ENCODE measurements at regions of chr5 and their contacts with region 1.

Region 1: GRCh38 chr5:141349917-141350619 is at the start of gene PCDHGB1:
- DNase-seq: no peak
- H3K4me3 ChIP-seq: peak within 1 kb of the TSS; percentile 32
- H3K27me3 ChIP-seq: no peaks in the 10 kb centered on the region
- CTCF ChIP-seq: peak; percentile 76
- polyA plus RNA-seq, gene PCDHGB1: 2.0 and 2.2 TPM in 2 replicates

Region 2: GRCh38 chr5:141192110-141192732 is 157.8 kb before region 1 on chr5 and contains the start of gene PCDHB10:
- CTCF ChIA-PET with region 1: no interaction called
- POLR2A ChIA-PET with region 1: no interaction called
- DNase-seq: no peak
- H3K4me3 ChIP-seq: no peak within 1 kb of the TSS
- H3K27me3 ChIP-seq: no peaks in the 10 kb centered on the region
- CTCF ChIP-seq: peak; percentile 40; the same call in 1 of the 2 replicates
- polyA plus RNA-seq, gene PCDHB10: 0.18 and 0.28 TPM in 2 replicates

Region 3: GRCh38 chr5:141326088-141326854 is 23.8 kb before region 1 on chr5:
- CTCF ChIA-PET with region 1: interaction called, 17 read pairs
- POLR2A ChIA-PET with region 1: no interaction called
- DNase-seq: no peak
- H3K4me3 ChIP-seq: peak overlapping the region; percentile 29
- H3K27me3 ChIP-seq: peaks cover 5% of the 10 kb centered on the region; the same call in 1 of the 2 replicates
- CTCF ChIP-seq: peak; percentile 79

Region 4: DNA sequence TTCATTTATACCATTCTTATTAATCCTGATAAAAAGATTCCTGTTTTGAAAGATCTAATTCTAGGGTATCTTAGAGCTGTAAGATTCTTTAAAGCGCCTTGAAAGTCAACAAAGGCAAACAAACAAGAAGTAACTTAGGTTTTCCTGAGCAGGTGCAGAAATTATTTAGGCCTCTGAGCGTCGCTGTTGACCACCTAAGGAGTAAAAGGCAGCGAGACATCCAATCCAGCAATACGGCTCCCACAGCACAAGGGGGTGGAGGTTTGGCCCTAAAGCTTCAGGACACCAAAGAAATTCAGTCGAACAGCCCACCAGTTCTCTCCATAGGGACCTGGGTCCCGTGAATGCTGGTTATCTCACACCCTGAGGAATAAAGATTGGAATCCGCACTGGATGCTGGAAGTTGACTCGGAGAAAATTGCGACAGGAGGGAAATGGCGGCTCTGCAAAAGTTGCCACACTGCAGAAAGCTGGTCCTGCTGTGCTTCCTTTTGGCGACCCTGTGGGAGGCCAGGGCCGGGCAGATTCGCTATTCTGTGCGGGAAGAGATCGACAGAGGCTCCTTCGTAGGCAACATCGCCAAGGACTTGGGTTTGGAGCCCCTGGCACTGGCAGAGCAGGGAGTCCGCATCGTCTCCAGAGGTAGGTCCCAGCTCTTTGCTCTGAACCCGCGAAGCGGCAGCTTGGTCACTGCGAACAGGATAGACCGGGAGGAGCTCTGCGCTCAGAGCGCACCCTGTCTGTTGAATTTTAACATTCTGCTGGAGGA is 11.3 kb before region 1 on chr5 and contains the start of gene PCDHGA2:
- CTCF ChIA-PET with region 1: interaction called, 16 read pairs
- POLR2A ChIA-PET with region 1: no interaction called
- DNase-seq: no peak
- H3K4me3 ChIP-seq: peak within 1 kb of the TSS; percentile 38
- H3K27me3 ChIP-seq: no peaks in the 10 kb centered on the region
- CTCF ChIP-seq: peak; percentile 66
- polyA plus RNA-seq, gene PCDHGA2: 6.7 and 6.8 TPM in 2 replicates

Region 5: DNA sequence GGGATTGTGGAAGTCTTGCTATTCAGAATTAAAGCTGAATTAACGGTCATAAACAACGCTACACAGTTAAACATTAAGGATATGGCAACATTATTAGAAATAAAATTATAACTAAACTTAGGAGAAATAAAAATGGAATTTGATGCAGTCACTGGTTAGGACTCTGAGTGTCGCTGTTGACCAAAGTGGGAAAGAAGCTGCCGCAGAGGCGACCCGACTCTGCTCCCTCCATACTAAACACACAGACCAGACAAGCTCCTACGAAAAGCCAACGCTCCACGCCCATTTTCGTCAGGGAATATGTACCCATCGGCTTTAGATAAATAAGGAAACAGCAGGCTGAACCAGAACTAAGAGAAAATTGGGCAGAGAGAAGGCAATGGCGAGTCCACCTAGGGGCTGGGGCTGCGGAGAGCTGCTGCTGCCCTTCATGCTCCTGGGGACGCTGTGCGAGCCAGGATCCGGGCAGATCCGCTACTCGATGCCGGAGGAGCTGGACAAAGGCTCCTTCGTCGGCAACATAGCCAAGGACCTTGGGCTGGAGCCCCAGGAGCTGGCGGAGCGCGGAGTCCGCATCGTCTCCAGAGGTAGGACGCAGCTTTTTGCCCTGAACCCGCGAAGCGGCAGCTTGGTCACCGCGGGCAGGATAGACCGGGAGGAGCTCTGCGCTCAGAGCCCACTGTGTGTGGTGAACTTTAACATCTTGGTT is 14.0 kb after region 1 on chr5 and contains the start of gene PCDHGA5:
- CTCF ChIA-PET with region 1: interaction called, 10 read pairs
- POLR2A ChIA-PET with region 1: no interaction called
- DNase-seq: no peak
- H3K4me3 ChIP-seq: peak within 1 kb of the TSS; percentile 30
- H3K27me3 ChIP-seq: peaks cover 2% of the 10 kb centered on the region; the same call in 1 of the 2 replicates
- CTCF ChIP-seq: peak; percentile 32; the same call in 1 of the 2 replicates
- polyA plus RNA-seq, gene PCDHGA5: 1.2 and 1.6 TPM in 2 replicates